GM12878 (cell line): ENCODE measurements at regions of chrX and their contacts with region 1.

Region 1: GRCh38 chrX:106791495-106791894 is 11.0 kb upstream of the TBC1D8B start:
- DNase-seq: no peak
- ATAC-seq: no peak
- H3K4me3 ChIP-seq: no peak overlapping the region
- H3K27ac ChIP-seq: no peak overlapping the region
- H3K4me1 ChIP-seq: no peaks in the 10 kb centered on the region
- H3K27me3 ChIP-seq: no peaks in the 10 kb centered on the region
- CTCF ChIP-seq: peak; percentile 21 to 42 (median 23); a peak in 3 of 6 replicates
- EP300 ChIP-seq: no peak
- POLR2A ChIP-seq: no peak
- RAD21 ChIP-seq: peak; percentile 50

Region 2: DNA sequence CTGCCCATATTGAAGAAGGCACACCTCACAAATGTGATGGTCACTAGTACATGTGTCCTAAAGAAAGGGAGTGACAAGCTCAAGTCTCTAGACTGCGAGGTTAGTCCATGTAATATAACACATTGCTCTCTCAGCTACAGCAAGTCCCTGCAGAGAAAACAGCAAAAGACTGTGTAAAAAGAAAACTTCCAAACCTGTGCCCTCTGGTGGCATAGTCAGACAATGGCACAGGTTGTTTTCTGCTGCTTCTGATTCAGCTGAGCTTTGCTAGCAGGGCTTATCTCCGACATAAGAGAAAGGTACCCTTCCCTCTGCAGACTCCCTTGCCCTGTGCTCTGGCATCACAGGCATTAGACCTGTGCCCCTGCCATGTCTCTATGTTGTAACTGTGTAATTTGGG is 751.6 kb before region 1 on chrX:
- CTCF ChIA-PET with region 1: no interaction called
- POLR2A ChIA-PET with region 1: no interaction called
- RAD21 ChIA-PET with region 1: no interaction called
- SMC1A ChIA-PET with region 1: no interaction called
- in situ Hi-C with region 1: no loop called
- intact Hi-C with region 1: loop called (anchors 10 kb)
- DNase-seq: no peak
- ATAC-seq: no peak
- H3K4me3 ChIP-seq: no peak overlapping the region
- H3K27ac ChIP-seq: no peak overlapping the region
- H3K4me1 ChIP-seq: no peaks in the 10 kb centered on the region
- H3K27me3 ChIP-seq: no peaks in the 10 kb centered on the region; a peak in 1 of 4 replicates
- CTCF ChIP-seq: peak; percentile 3 to 27 (median 17); a peak in 2 of 6 replicates
- EP300 ChIP-seq: no peak
- POLR2A ChIP-seq: no peak
- RAD21 ChIP-seq: no peak

Region 3: GRCh38 chrX:106415276-106415895 is 376.1 kb before region 1 on chrX:
- CTCF ChIA-PET with region 1: no interaction called
- POLR2A ChIA-PET with region 1: no interaction called
- RAD21 ChIA-PET with region 1: interaction called, 3 read pairs
- SMC1A ChIA-PET with region 1: interaction called, 4 read pairs
- in situ Hi-C with region 1: no loop called
- intact Hi-C with region 1: loop called (anchors 5 kb)
- DNase-seq: no peak
- ATAC-seq: peak; percentile 80
- H3K4me3 ChIP-seq: no peak overlapping the region
- H3K27ac ChIP-seq: no peak overlapping the region
- H3K4me1 ChIP-seq: no peaks in the 10 kb centered on the region
- H3K27me3 ChIP-seq: no peaks in the 10 kb centered on the region
- CTCF ChIP-seq: peak; percentile 64 to 79 (median 66)
- EP300 ChIP-seq: no peak
- POLR2A ChIP-seq: no peak
- RAD21 ChIP-seq: peak; percentile 38

Region 4: DNA sequence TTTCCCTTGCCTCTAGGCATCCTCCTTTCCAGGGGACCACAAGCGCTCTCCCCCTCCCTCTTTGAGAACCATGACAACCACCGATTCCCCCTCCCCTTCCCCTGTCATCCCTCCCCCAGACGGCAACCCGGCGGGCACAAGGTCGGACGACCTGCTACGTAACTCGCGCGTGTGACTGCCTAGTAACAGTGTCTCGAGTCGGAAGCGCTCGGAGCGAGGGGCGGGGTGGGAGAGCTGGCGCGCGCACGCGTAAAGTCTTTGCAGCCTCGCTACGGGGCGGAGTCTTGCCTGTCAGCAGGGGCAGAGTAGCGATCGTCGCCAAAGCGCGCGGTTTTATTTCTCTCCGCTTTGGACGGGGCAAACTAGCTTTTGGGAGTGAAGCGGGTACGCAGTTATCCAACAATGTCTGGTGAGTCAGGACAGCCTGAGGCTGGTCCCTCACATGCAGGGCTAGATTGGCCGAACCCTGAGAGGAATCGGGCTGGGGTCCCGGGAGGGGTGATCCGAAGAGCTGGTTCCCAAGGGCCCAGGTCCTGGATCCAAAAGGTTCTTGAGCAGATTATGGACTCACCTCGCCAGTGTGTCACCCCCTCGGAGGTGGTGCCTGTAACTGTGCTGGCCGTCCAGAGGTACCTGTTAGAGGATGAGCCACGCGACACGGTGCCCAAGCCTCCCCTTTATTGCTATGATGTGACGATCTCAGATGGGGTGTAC is 179.7 kb before region 1 on chrX and contains the start of gene RADX:
- CTCF ChIA-PET with region 1: no interaction called
- POLR2A ChIA-PET with region 1: no interaction called
- RAD21 ChIA-PET with region 1: no interaction called
- SMC1A ChIA-PET with region 1: no interaction called
- in situ Hi-C with region 1: no loop called
- intact Hi-C with region 1: loop called (anchors 10 kb)
- DNase-seq: peak; percentile 49
- ATAC-seq: peak; percentile 98
- H3K4me3 ChIP-seq: peak within 1 kb of the TSS; percentile 73
- H3K27ac ChIP-seq: peak within 1 kb of the TSS; percentile 46
- H3K4me1 ChIP-seq: no peaks in the 10 kb centered on the region
- H3K27me3 ChIP-seq: no peaks in the 10 kb centered on the region
- CTCF ChIP-seq: no peak
- EP300 ChIP-seq: no peak
- POLR2A ChIP-seq: peak; percentile 62
- RAD21 ChIP-seq: no peak
- polyA plus RNA-seq, gene RADX: 4.3 to 5.4 TPM

Region 5: DNA sequence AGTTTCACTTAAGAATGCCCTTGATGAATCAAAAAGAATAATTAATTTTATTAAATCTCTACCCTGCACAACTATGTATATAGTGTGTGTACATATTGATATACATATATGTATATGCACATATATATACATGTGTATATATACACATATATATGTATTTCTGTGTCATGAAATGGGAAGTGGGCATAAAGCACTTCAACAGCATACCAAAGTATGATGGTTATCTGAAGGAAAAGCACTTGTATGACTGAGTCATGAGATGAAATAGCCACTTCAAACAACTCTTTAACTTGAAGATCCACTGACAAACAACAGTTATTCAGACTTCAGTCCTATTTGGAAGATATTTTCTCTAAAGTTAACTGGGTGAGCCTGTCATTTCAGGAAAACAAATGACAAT is 48.7 kb before region 1 on chrX:
- CTCF ChIA-PET with region 1: no interaction called
- POLR2A ChIA-PET with region 1: no interaction called
- RAD21 ChIA-PET with region 1: no interaction called
- SMC1A ChIA-PET with region 1: no interaction called
- in situ Hi-C with region 1: no loop called
- intact Hi-C with region 1: no loop called
- DNase-seq: no peak
- ATAC-seq: no peak
- H3K4me3 ChIP-seq: no peak overlapping the region
- H3K27ac ChIP-seq: no peak overlapping the region
- H3K4me1 ChIP-seq: no peaks in the 10 kb centered on the region
- H3K27me3 ChIP-seq: no peaks in the 10 kb centered on the region
- CTCF ChIP-seq: no peak
- EP300 ChIP-seq: no peak
- POLR2A ChIP-seq: no peak
- RAD21 ChIP-seq: no peak

Region 6: GRCh38 chrX:106774317-106774716 is 17.2 kb before region 1 on chrX:
- CTCF ChIA-PET with region 1: no interaction called
- POLR2A ChIA-PET with region 1: no interaction called
- RAD21 ChIA-PET with region 1: no interaction called
- SMC1A ChIA-PET with region 1: no interaction called
- in situ Hi-C with region 1: no loop called
- intact Hi-C with region 1: no loop called
- DNase-seq: no peak
- ATAC-seq: no peak
- H3K4me3 ChIP-seq: no peak overlapping the region
- H3K27ac ChIP-seq: no peak overlapping the region
- H3K4me1 ChIP-seq: no peaks in the 10 kb centered on the region
- H3K27me3 ChIP-seq: no peaks in the 10 kb centered on the region
- CTCF ChIP-seq: no peak
- EP300 ChIP-seq: no peak
- POLR2A ChIP-seq: no peak
- RAD21 ChIP-seq: no peak

Region 7: GRCh38 chrX:106874075-106874474 is 82.6 kb after region 1 on chrX:
- CTCF ChIA-PET with region 1: no interaction called
- POLR2A ChIA-PET with region 1: no interaction called
- RAD21 ChIA-PET with region 1: no interaction called
- SMC1A ChIA-PET with region 1: no interaction called
- in situ Hi-C with region 1: no loop called
- intact Hi-C with region 1: no loop called
- DNase-seq: no peak
- ATAC-seq: peak; percentile 62
- H3K4me3 ChIP-seq: no peak overlapping the region
- H3K27ac ChIP-seq: no peak overlapping the region
- H3K4me1 ChIP-seq: no peaks in the 10 kb centered on the region
- H3K27me3 ChIP-seq: no peaks in the 10 kb centered on the region
- CTCF ChIP-seq: peak; percentile 38 to 53 (median 49); a peak in 5 of 6 replicates
- EP300 ChIP-seq: no peak
- POLR2A ChIP-seq: no peak
- RAD21 ChIP-seq: peak; percentile 35; the same call in 1 of the 2 replicates